ENCODE measurements at regions of chr20 and their contacts with region 1.

Region 1: GRCh38 chr20:25116739-25117458 is 35.0 kb upstream of the VSX1 start:
- DNase-seq: no peak
- ATAC-seq: peak; percentile 48
- H3K4me3 ChIP-seq: no peak overlapping the region
- H3K27ac ChIP-seq: no peak overlapping the region
- H3K4me1 ChIP-seq: peaks cover 0 to 3% of the 10 kb centered on the region in 2 donors
- H3K27me3 ChIP-seq: no peaks in the 10 kb centered on the region

Region 2: DNA sequence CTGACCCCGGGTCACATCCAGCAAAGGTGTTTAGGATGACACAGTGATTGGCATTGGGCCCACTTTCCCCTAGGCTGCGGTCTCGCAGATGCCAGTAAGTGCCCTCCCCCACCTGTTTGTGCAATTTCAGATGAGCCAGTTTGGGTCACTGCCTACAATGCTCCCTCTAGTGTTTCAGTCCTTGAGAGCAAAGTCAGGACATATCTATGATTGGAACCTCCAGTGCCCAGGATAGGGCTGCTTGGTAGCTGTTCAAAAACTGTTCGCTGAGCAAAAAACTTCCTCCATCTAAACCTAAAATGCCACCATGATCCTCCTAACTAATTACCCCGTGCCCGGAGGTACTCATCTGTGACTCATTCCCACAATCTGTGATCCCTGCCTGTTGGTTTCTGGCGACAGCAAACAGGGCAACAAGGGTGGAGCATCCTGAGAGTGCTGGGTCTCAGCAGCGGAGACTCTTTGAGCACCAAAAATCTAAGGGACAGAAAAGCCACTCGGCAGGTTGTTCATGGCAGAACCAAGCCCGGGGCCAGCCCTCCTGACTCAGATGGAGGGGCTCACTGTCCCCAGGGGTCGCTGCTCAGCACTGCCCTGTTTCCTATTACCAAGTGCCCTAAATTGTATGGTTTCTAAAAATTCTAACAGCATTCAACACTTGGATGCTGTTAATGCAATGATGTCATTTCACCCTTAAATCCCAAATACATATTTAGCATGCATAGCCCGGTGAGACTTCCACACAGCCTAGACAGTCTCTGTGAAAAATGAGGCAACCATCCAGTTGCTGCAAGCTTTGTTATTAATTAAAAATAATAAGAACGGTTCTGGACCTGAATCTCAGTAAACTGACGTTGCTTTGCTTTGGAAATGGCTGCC is 39.9 kb before region 1 on chr20:
- intact Hi-C with region 1: loop called in 1 of 2 experiments (anchors 5 kb)
- DNase-seq: no peak
- ATAC-seq: no peak
- H3K4me3 ChIP-seq: peak overlapping the region in 1 of 2 donors; percentile 16
- H3K27ac ChIP-seq: no peak overlapping the region
- H3K4me1 ChIP-seq: no peaks in the 10 kb centered on the region
- H3K27me3 ChIP-seq: peaks cover 0 to 7% of the 10 kb centered on the region in 2 donors

Region 3: DNA sequence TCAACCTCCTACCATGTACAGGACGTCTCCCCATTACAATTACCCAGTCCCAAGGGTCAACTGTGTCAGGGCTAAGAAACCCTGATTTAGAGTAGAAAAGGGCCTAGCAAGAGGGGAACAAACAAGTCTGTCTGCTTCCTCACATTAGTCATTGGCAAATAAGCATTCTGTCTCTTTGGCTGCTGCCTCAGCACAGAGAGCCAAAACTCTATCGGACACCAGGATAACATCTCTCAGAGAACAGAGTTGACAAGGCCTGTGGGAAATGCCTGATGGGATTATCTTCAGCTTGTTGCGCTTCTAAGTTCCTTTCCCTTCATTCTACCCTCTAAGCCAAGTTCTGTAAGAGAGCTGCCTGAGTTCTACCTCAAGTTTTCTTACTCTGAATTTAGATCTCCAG is 16.0 kb before region 1 on chr20:
- intact Hi-C with region 1: no loop called
- DNase-seq: no peak
- ATAC-seq: peak; percentile 26
- H3K4me3 ChIP-seq: no peak overlapping the region
- H3K27ac ChIP-seq: no peak overlapping the region
- H3K4me1 ChIP-seq: no peaks in the 10 kb centered on the region
- H3K27me3 ChIP-seq: no peaks in the 10 kb centered on the region

Region 4: DNA sequence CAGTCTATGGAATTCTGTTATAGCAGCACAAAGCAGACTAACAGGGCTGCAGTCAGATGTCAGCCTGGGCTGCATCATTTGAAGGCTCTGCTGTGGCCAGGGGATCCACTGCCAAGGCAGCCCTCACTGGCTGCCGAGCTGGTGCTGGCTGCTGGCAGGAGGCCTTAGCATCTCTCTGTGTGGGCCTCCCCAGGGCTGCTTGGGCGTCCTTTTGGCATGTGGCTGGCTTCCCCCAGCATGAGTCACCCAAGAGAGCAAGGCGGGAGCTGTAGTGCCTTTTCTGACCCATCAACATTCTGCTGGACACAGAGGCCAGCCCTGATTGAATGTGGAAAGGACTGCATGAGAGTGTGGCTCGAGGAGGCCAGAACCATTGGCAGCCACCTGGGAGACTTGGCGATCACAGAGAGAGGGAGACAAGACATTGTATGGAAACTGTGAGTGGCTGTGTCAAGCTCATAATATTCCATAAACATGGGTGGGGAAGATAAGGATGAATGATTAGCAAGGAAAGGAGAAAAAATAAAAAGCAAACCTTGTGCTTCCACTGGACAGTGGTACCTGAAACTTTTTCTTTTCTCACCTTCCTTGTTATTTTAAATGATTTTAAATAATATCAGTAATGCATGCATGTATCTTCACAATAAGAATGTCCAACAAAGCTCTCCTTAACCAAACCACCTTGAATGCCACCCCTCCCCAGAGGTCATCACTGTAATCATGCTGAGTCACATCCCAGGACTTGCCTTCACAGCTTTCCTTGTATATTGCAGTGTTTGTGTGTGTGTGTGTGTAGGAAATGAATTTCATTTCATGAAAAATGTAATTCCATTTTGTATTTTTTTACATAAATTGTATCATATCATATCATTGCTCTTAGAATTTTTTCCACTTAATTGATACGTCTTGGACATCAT is 20.0 kb after region 1 on chr20:
- intact Hi-C with region 1: loop called in 1 of 2 experiments (anchors 2 kb)
- DNase-seq: peak; percentile 93
- ATAC-seq: peak; percentile 89
- H3K4me3 ChIP-seq: no peak overlapping the region
- H3K27ac ChIP-seq: no peak overlapping the region
- H3K4me1 ChIP-seq: no peaks in the 10 kb centered on the region
- H3K27me3 ChIP-seq: no peaks in the 10 kb centered on the region

Measured in aorta (tissue), 5 donors.